ENCODE measurements at regions of chr1 and their contacts with region 1.

Region 1: DNA sequence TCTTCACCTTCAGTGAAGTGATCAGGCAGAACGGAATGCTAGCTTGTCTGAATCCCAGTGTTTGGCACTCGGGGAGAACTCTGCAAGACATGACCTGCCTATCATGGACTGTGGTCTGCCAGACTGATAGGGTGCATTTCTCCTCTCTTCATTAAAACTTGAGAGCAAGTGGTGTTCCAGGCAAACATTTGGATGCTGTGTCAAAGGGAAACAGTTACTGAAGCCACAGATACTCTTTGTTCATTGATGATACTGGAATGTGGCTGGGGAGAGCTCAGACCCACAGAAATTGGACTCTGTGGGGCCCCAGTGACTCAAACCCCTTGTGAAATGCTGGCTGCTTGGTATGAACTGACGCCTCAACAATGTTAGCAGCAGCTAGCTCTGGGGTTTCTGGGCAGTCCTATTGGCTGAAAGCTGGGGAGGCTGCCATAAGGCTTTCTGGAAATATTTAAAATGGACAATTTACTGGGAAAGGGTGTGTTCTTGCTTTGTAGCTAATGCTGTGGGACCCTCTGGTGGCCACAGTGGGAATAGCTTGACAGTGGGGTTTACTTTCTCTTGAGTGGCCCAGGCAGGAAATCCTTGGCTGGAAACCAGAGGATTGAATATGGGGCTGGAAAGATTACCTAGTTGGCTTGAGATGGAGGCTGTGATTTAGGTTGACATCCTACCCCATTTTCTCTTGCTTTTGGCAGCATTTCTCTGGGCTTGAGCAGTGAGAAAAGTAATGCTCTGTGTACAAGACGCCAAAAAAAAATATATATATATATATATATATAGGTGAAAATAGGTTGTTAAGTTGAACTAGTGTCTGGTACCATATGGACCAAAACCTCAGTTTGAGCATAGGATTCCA is 8.0 kb upstream of the S100A10 start:
- DNase-seq: peak; percentile 96
- H3K4me3 Mint-ChIP-seq: peak overlapping the region; percentile 28
- H3K27ac Mint-ChIP-seq: peak overlapping the region; percentile 33
- H3K4me1 Mint-ChIP-seq: peaks cover 55% of the 10 kb centered on the region
- H3K27me3 Mint-ChIP-seq: no peaks in the 10 kb centered on the region
- CTCF ChIP-seq: peak; percentile 98

Region 2: DNA sequence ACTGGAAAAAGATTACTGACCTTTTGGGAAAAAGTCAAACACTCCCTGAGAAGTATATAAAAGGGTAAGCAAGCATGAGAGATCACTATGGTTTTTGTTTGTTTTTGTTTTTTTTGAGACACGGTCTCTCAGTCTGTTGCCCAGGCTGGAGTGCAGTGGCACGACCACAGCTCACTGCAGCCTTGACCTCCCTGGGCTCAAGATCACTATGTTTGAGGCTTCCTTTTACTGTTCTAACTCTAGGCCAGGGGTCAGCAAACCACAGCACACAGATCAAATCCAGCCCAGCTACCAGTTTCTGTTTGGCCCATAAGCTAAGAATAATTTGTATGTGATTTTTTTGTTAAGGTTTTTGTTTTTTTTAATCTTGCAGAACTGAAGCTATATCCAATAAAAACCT is 576.5 kb before region 1 on chr1:
- CTCF ChIA-PET with region 1: no interaction called
- POLR2A ChIA-PET with region 1: no interaction called
- intact Hi-C with region 1: no loop called
- DNase-seq: no peak
- H3K4me3 Mint-ChIP-seq: no peak overlapping the region
- H3K27ac Mint-ChIP-seq: no peak overlapping the region
- H3K4me1 Mint-ChIP-seq: no peaks in the 10 kb centered on the region
- H3K27me3 Mint-ChIP-seq: no peaks in the 10 kb centered on the region
- CTCF ChIP-seq: no peak

Region 3: GRCh38 chr1:151534665-151535278 is 466.8 kb before region 1 on chr1:
- CTCF ChIA-PET with region 1: no interaction called
- POLR2A ChIA-PET with region 1: no interaction called
- intact Hi-C with region 1: loop called (anchors 1 kb)
- DNase-seq: peak; percentile 89
- H3K4me3 Mint-ChIP-seq: no peak overlapping the region
- H3K27ac Mint-ChIP-seq: no peak overlapping the region
- H3K4me1 Mint-ChIP-seq: peaks cover 28% of the 10 kb centered on the region
- H3K27me3 Mint-ChIP-seq: no peaks in the 10 kb centered on the region
- CTCF ChIP-seq: peak; percentile 95

Region 4: GRCh38 chr1:151888972-151889570 is 112.5 kb before region 1 on chr1:
- CTCF ChIA-PET with region 1: interaction called, 60 read pairs
- POLR2A ChIA-PET with region 1: interaction called, 8 read pairs
- intact Hi-C with region 1: loop called (anchors 1 kb)
- DNase-seq: peak; percentile 42
- H3K4me3 Mint-ChIP-seq: no peak overlapping the region
- H3K27ac Mint-ChIP-seq: no peak overlapping the region
- H3K4me1 Mint-ChIP-seq: peaks cover 30% of the 10 kb centered on the region
- H3K27me3 Mint-ChIP-seq: no peaks in the 10 kb centered on the region
- CTCF ChIP-seq: peak; percentile 53

Region 5: GRCh38 chr1:151934048-151934493 is 67.5 kb before region 1 on chr1:
- CTCF ChIA-PET with region 1: interaction called, 350 read pairs
- POLR2A ChIA-PET with region 1: interaction called, 453 read pairs
- intact Hi-C with region 1: loop called (anchors 1 kb)
- DNase-seq: peak; percentile 82
- H3K4me3 Mint-ChIP-seq: no peak overlapping the region
- H3K27ac Mint-ChIP-seq: no peak overlapping the region
- H3K4me1 Mint-ChIP-seq: peaks cover 11% of the 10 kb centered on the region
- H3K27me3 Mint-ChIP-seq: no peaks in the 10 kb centered on the region
- CTCF ChIP-seq: peak; percentile 96

Region 6: DNA sequence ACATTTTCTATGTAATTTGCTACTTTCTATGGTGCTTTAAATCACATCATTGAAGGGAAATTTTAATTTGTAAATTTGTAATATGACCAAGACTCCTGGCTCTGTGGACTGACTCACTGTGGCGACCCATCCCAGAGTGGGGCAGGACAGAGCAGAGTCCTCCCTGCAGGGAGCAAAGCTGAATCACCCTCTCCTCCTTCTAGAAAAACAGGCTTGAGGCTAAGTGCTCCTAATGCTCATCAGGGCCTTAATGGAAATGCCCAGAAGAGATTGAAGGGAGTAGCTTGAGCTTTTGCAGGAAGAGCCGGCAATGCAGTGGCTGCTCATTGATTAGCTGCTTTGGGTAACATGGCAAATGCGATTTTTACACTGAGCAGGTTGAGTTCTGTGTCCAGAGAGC is 24.8 kb before region 1 on chr1:
- CTCF ChIA-PET with region 1: interaction called, 543 read pairs
- POLR2A ChIA-PET with region 1: interaction called, 1,089 read pairs
- intact Hi-C with region 1: no loop called
- DNase-seq: peak; percentile 82
- H3K4me3 Mint-ChIP-seq: no peak overlapping the region
- H3K27ac Mint-ChIP-seq: peak overlapping the region; percentile 62
- H3K4me1 Mint-ChIP-seq: peaks cover 71% of the 10 kb centered on the region
- H3K27me3 Mint-ChIP-seq: no peaks in the 10 kb centered on the region
- CTCF ChIP-seq: no peak

Region 7: DNA sequence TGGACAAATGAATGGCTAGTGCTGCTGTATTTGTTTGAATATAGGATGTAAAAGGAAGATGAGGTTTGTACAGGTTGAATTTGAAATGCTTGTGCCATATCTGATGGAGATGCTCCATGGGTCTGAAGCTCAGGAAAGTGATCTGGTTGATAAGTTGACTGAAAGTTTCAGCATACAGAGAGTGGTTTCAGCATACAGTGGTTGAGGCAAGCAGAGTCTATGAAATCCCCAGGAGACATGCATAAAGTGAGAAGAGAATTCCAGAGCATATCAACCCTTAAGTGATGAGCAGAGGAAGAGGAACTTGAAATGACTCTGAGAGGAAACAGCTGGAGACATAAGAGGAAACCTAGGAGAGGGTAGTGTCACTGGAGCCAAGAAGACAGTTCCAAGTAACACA is 65.5 kb after region 1 on chr1:
- CTCF ChIA-PET with region 1: no interaction called
- POLR2A ChIA-PET with region 1: no interaction called
- intact Hi-C with region 1: no loop called
- DNase-seq: no peak
- H3K4me3 Mint-ChIP-seq: no peak overlapping the region
- H3K27ac Mint-ChIP-seq: no peak overlapping the region
- H3K4me1 Mint-ChIP-seq: no peaks in the 10 kb centered on the region
- H3K27me3 Mint-ChIP-seq: peaks cover 17% of the 10 kb centered on the region
- CTCF ChIP-seq: no peak

Region 8: GRCh38 chr1:152078831-152079441 is 77.3 kb after region 1 on chr1:
- CTCF ChIA-PET with region 1: no interaction called
- POLR2A ChIA-PET with region 1: no interaction called
- intact Hi-C with region 1: no loop called
- DNase-seq: no peak
- H3K4me3 Mint-ChIP-seq: no peak overlapping the region
- H3K27ac Mint-ChIP-seq: no peak overlapping the region
- H3K4me1 Mint-ChIP-seq: no peaks in the 10 kb centered on the region
- H3K27me3 Mint-ChIP-seq: peaks cover 37% of the 10 kb centered on the region
- CTCF ChIP-seq: no peak

Region 9: DNA sequence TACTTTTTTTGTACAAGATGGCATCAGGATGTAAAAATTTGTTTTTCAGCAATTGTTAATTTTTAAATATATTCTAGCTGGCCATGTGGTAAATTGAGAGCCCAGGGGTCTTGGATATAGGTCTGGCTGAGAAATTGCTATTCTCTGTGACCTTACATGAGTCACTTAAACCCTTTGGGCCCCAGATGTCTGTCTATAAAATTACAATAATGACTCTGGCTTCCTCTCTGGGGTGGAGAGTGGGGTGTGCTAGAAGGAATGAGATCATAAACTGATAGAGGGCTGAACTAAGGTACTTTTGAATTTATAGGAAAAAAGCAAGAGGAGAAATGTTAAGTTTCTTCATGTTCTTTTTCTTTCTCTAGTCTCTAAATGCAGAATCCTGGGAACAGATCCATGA is 126.0 kb after region 1 on chr1:
- CTCF ChIA-PET with region 1: no interaction called
- POLR2A ChIA-PET with region 1: no interaction called
- intact Hi-C with region 1: no loop called
- DNase-seq: no peak
- H3K4me3 Mint-ChIP-seq: no peak overlapping the region
- H3K27ac Mint-ChIP-seq: no peak overlapping the region
- H3K4me1 Mint-ChIP-seq: no peaks in the 10 kb centered on the region
- H3K27me3 Mint-ChIP-seq: no peaks in the 10 kb centered on the region
- CTCF ChIP-seq: no peak

Region 10: GRCh38 chr1:152182431-152182830 is 180.8 kb after region 1 on chr1:
- CTCF ChIA-PET with region 1: interaction called, 5 read pairs
- POLR2A ChIA-PET with region 1: interaction called, 11 read pairs
- intact Hi-C with region 1: no loop called
- DNase-seq: peak; percentile 80
- H3K4me3 Mint-ChIP-seq: no peak overlapping the region
- H3K27ac Mint-ChIP-seq: peak overlapping the region; percentile 82
- H3K4me1 Mint-ChIP-seq: peaks cover 64% of the 10 kb centered on the region
- H3K27me3 Mint-ChIP-seq: no peaks in the 10 kb centered on the region
- CTCF ChIP-seq: peak; percentile 94